A673 (cell line): ENCODE measurements at regions of chr3 and their contacts with region 1.

Region 1: GRCh38 chr3:8416965-8417364 is 84.7 kb upstream of the LMCD1 start:
- DNase-seq: peak; percentile 66
- H3K4me3 ChIP-seq: no peak overlapping the region
- H3K27ac ChIP-seq: peak overlapping the region; percentile 34
- H3K4me1 ChIP-seq: peaks cover 24% of the 10 kb centered on the region
- H3K27me3 ChIP-seq: no peaks in the 10 kb centered on the region
- CTCF ChIP-seq: no peak

Region 2: DNA sequence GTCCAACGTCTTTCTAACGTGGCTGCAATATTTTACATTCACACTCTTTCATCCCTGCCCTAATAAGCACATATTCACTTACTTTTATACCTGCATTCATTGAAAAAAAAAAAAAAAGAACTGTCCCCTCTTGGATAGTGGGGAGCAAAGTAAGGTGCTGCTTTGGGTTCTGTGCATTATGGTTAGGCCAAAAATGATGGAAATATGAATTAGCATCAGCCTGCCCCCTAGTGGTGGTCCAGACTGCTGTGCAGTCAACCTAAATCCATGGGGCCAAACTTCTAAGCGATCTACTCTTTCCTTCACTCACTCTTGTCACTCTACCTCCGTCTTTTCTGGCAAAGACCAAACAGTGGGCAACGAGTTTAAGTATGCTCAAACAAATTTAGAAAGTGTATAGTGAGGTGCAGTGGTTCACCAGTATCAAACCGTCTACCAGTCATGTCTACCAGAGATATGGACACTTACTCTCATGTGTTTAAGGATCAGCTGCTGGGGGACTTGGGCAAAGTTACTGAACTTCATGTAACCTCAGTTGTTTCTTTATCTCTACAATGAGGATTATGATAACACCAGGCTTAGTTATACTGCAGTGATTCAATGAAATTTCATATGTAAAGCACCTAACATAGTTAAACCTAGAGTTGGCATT is 1617.6 kb before region 1 on chr3:
- CTCF ChIA-PET with region 1: no interaction called
- POLR2A ChIA-PET with region 1: no interaction called
- intact Hi-C with region 1: loop called (anchors 10 kb)
- DNase-seq: peak; percentile 41
- H3K4me3 ChIP-seq: no peak overlapping the region
- H3K27ac ChIP-seq: no peak overlapping the region
- H3K4me1 ChIP-seq: no peaks in the 10 kb centered on the region
- H3K27me3 ChIP-seq: no peaks in the 10 kb centered on the region
- CTCF ChIP-seq: peak; percentile 84

Region 3: DNA sequence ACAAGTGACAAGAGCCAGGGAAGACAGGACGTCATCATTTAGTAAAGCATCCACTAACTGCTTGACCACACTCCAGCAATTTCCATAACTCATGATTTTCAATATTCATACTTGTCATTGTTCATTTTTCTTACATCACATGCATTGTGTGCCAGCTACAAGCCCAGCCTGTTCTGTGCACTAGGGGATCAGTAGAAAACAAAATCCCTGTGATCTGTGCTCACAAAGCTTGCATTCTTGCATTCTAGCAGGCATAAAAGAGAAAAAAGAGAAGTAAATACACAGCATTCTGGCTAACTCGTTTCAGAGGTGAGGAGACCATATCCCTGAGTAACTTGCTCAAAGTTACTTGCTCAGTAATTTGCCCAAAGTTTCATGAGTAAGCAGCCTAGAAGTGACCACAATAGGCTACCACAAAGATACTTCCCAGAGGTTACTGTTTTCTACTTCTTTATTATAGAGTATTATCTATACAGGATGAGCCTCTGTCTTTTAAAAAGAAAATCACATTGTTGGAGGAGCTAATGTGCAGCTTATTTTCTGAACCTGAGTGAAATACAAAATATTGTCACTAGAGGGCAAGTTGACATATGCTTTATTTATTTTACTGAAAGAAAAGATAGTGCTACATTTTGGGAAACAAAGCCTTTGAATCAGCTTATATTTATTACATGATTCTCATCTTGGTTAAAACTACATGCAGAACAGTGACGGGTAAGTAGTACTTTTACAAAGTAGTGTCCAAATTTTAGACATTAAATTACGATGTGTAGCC is 616.8 kb before region 1 on chr3:
- CTCF ChIA-PET with region 1: interaction called, 5 read pairs
- POLR2A ChIA-PET with region 1: no interaction called
- intact Hi-C with region 1: loop called (anchors 5 kb)
- DNase-seq: peak; percentile 52
- H3K4me3 ChIP-seq: no peak overlapping the region
- H3K27ac ChIP-seq: no peak overlapping the region
- H3K4me1 ChIP-seq: no peaks in the 10 kb centered on the region
- H3K27me3 ChIP-seq: no peaks in the 10 kb centered on the region
- CTCF ChIP-seq: peak; percentile 61

Region 4: DNA sequence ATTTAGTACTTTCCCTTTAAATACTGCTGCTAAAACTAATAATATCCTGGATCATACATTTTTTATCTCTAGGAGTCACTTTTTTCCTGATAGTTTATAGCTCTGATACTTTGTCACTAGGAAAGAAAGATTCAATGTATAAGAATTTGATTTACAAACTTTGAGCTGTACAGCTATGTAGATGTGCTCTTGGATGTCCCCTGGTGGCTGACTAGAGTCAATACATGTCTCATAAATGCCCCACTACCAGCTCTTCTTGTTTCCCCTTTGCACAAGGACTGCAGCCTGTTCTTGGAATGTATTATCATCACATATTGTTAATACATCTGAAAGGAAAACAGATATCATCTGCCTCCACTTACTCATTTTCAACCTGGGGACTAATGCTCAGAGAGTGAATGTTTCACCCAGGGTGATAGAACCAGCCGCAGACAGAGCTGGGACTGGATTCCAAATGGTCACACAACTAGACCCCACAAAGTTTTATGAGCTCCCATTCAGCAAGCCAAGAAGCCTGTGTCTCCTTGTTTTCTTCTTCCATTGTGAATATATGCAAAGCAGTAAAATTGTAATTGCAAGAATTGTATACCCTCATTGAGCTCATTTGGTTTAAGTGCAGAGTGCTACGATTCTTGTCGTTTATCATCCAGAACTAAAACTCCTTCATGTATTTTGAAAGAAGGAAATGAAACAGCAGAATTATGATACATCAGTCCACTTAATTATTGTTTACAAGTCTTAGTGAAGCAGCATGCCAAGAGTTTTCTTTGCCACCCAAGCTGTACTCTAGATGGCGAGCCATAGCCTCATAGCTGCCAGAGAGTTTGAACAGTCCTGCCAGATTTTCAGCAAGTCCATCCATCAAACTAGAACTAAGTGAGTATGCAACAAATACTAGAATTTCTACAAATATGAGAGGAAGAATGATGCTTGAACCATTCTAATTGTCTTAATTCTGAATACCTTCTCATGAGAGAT is 177.0 kb before region 1 on chr3:
- CTCF ChIA-PET with region 1: interaction called, 26 read pairs
- POLR2A ChIA-PET with region 1: no interaction called
- intact Hi-C with region 1: no loop called
- DNase-seq: peak; percentile 79
- H3K4me3 ChIP-seq: no peak overlapping the region
- H3K27ac ChIP-seq: peak overlapping the region; percentile 44
- H3K4me1 ChIP-seq: peaks cover 28% of the 10 kb centered on the region
- H3K27me3 ChIP-seq: no peaks in the 10 kb centered on the region
- CTCF ChIP-seq: peak; percentile 86

Region 5: DNA sequence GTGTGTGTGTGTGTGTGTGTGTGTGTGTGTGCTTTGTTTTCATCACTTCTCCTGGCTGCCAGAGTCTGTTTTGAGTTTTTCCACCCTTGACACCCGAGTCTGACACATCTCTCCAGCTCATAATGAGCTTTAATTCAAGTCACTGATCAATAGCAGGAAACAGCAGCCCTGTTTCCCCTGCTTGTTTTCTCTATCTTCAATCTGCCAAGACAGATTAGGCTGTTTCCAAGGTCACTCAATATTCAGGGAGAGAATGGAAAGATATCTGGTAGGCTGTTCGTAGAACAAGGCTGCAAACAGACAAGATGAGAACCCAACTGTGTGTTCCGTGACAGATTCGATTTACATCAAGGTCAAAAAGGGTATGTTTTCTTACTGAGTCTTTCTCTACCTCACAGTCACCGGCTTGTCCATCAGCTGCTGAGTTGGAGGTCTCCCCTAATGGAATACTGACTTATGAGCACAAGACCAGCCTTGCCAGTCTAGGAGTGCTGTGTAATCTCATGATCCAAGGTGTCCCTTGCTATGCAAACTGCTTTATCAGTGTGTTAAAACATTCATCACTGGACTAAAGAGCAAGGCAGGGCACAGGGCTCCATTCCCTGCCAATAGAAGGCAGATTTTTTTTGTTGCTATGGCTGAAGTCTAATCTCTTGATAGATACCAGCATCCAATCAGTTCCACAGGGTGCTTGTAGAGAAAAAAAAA is 103.3 kb before region 1 on chr3:
- CTCF ChIA-PET with region 1: no interaction called
- POLR2A ChIA-PET with region 1: no interaction called
- intact Hi-C with region 1: loop called (anchors 1 kb)
- DNase-seq: no peak
- H3K4me3 ChIP-seq: no peak overlapping the region
- H3K27ac ChIP-seq: peak overlapping the region; percentile 96
- H3K4me1 ChIP-seq: peaks cover 56% of the 10 kb centered on the region
- H3K27me3 ChIP-seq: no peaks in the 10 kb centered on the region
- CTCF ChIP-seq: no peak

Region 6: GRCh38 chr3:8622873-8623691 is 206.1 kb after region 1 on chr3:
- CTCF ChIA-PET with region 1: no interaction called
- POLR2A ChIA-PET with region 1: no interaction called
- intact Hi-C with region 1: loop called (anchors 1 kb)
- DNase-seq: peak; percentile 78
- H3K4me3 ChIP-seq: no peak overlapping the region
- H3K27ac ChIP-seq: no peak overlapping the region
- H3K4me1 ChIP-seq: no peaks in the 10 kb centered on the region
- H3K27me3 ChIP-seq: no peaks in the 10 kb centered on the region
- CTCF ChIP-seq: peak; percentile 96